ENCODE measurements at regions of chr11 and their contacts with region 1.

Region 1: GRCh38 chr11:69726019-69726418 is 22.2 kb upstream of the FGF19 start:
- DNase-seq: no peak

Region 2: DNA sequence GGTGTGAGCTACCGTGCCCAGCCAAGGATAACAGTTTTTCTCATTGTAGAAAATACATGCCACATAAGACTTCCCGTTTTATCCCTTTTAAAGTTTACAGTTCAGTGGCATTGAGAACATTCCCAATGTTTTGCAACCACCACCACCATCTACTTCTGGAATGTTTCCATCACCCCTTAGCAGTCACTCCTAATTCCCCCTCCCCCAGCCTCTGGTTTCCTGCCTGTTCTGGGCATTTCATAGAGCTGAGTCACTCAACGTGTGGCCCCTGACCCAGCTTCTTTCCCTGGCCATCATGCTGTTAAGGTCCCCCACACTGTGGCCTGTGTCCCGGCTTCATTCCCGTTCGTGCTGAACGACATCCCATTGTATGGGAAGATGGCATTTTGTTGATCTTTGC is 18.4 kb after region 1 on chr11:
- intact Hi-C with region 1: loop called in 1 of 2 experiments (anchors 1 kb)
- DNase-seq: no peak

Measured in posterior vena cava (tissue), 2 donors.